ENCODE measurements at regions of chr14 and their contacts with region 1.

Region 1: GRCh38 chr14:50335389-50335788 is 23.3 kb downstream of the DMAC2L start:
- DNase-seq: no peak
- ATAC-seq: no peak
- H3K4me3 Mint-ChIP-seq: no peak overlapping the region
- H3K27ac Mint-ChIP-seq: peak overlapping the region; percentile 36
- H3K4me1 Mint-ChIP-seq: peaks cover 14% of the 10 kb centered on the region
- H3K27me3 Mint-ChIP-seq: no peaks in the 10 kb centered on the region
- CTCF ChIP-seq: no peak

Region 2: DNA sequence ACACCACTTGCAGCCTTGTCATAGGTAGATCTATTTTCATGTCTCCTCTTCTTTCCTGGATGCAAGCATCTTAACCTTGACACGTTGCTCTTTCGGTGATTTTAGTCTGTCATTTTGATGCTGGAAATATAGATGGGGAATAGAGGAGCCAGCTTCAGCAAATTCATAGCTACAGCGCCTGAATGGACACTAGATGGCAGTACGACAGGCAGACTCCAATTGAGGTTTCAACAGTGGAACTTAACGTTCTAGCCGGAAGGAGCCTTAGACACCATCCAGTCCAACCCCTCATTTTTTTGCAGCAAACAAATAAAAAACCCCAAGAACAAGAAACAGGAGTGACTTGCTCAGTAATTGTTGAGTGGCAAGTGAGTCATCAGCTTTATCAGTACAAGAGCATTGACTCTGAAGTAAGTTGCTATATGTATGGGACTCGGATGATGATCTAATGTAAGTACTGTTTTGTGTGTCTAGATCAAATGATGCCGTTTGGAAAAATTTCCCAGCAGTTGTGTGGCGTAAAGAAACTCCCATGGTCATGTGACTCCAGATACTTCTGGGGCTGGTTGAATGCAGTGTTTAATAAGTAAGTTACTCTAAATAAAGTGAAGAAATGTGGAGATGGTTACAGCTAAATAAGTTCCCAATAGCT is 14.3 kb before region 1 on chr14:
- CTCF ChIA-PET with region 1: interaction called, 11 read pairs
- POLR2A ChIA-PET with region 1: interaction called, 3 read pairs
- intact Hi-C with region 1: no loop called
- DNase-seq: no peak
- ATAC-seq: peak; percentile 94
- H3K4me3 Mint-ChIP-seq: no peak overlapping the region
- H3K27ac Mint-ChIP-seq: no peak overlapping the region
- H3K4me1 Mint-ChIP-seq: peaks cover 21% of the 10 kb centered on the region
- H3K27me3 Mint-ChIP-seq: no peaks in the 10 kb centered on the region
- CTCF ChIP-seq: peak; percentile 43

Region 3: DNA sequence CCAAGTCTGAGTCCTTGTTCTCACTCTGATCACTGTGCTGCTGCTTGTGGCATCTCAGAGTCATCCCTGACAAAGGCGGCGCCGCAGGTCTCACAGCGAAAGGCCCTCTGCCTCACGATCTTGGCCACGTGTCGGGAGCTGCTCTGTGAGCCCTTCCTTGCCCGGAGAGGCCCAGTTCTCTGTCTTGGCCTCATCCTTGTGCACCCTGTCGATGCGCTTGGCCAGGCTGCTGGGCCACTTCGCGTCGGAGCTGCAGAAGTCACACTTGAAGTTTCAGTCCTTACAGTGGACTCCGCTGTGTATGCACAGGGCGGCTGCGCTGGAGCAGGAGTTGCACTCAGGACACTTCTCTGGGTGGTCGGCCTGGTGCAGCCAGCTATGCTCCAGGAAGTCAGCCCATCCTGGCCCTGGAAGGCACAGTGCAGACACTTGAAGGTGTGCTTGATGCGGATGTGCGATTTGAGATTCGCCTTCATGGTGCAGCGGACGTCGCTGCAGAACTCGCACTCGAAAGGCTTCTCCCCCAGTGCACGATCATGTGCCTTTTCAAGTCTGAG is 369.1 kb after region 1 on chr14:
- CTCF ChIA-PET with region 1: no interaction called
- POLR2A ChIA-PET with region 1: no interaction called
- intact Hi-C with region 1: no loop called
- DNase-seq: no peak
- ATAC-seq: no peak
- H3K4me3 Mint-ChIP-seq: no peak overlapping the region
- H3K27ac Mint-ChIP-seq: no peak overlapping the region
- H3K4me1 Mint-ChIP-seq: peaks cover 2% of the 10 kb centered on the region
- H3K27me3 Mint-ChIP-seq: no peaks in the 10 kb centered on the region
- CTCF ChIP-seq: no peak

Measured in activated B cell treated with CpG ODN at 0.5 μM for 24 hours (primary cell).